ENCODE measurements at regions of chr20 and their contacts with region 1.

Region 1: DNA sequence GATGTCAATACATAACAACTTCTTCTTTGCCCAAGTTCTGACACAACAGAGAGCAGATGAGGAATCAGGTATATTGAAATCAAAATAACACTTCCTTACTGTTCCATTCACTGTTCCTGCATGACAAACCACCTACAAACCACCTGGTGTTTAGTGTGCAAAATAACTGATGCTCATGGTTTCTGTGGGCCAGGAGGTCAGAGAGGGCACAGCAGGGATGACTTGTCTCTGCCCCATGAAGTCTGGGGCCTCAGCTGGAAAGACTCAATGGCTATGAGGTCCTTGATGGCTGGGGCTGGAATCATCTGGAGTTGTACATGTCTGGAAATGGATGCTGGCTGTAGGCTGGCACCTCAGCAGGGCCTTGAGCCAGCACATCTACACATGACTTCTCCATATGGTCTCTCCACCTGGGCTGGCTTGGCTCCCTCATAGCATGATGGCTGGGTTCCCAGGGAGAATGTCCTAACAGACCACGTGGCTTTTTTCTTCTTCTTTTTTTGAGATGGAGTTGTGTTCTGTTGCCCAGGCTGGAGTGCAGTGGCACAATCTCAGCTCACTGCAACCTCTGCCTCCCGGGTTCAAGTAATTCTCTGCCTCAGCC is 7.4 kb upstream of the COX4I2 start:
- DNase-seq: peak; percentile 30
- ATAC-seq: peak; percentile 42
- H3K4me3 Mint-ChIP-seq: no peak overlapping the region
- H3K27ac Mint-ChIP-seq: no peak overlapping the region
- H3K4me1 Mint-ChIP-seq: peaks cover 5% of the 10 kb centered on the region
- H3K27me3 Mint-ChIP-seq: no peaks in the 10 kb centered on the region
- CTCF ChIP-seq: no peak

Region 2: GRCh38 chr20:31595654-31596411 is 34.5 kb before region 1 on chr20:
- CTCF ChIA-PET with region 1: no interaction called
- POLR2A ChIA-PET with region 1: no interaction called
- intact Hi-C with region 1: no loop called
- DNase-seq: no peak
- ATAC-seq: no peak
- H3K4me3 Mint-ChIP-seq: no peak overlapping the region
- H3K27ac Mint-ChIP-seq: no peak overlapping the region
- H3K4me1 Mint-ChIP-seq: peaks cover 6% of the 10 kb centered on the region
- H3K27me3 Mint-ChIP-seq: peaks cover 7% of the 10 kb centered on the region
- CTCF ChIP-seq: no peak

Region 3: DNA sequence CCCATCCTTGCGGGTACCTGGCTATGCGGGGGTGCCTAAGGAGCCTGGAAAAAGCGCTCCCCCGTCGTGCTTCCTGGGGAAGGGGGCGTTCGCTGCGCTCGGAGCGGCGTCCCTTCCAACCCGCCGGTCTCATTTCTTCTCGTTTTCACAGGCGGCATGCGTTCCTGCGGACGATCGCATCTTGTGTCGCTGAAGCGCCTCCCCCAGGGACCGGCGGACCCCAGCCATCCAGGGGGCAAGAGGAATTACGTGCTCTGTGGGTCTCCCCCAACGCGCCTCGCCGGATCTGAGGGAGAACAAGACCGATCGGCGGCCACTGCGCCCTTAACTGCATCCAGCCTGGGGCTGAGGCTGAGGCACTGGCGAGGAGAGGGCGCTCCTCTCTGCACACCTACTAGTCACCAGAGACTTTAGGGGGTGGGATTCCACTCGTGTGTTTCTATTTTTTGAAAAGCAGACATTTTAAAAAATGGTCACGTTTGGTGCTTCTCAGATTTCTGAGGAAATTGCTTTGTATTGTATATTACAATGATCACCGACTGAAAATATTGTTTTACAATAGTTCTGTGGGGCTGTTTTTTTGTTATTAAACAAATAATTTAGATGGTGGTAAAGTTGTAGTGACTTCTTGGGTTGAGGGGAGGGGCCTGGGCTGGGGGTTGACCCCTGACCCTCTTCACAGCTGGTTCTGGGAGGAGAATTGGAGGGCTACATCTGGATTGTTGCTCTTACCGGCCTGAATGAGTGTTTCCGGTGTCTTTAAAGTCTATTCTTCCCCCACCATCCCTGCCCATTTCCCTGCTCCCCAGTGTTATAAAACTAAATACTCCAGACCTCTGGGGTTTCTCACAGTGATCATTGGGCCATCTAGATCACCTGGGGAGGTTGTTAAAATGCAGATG is 24.1 kb before region 1 on chr20:
- CTCF ChIA-PET with region 1: no interaction called
- POLR2A ChIA-PET with region 1: no interaction called
- intact Hi-C with region 1: no loop called
- DNase-seq: no peak
- ATAC-seq: no peak
- H3K4me3 Mint-ChIP-seq: peak overlapping the region; percentile 78
- H3K27ac Mint-ChIP-seq: no peak overlapping the region
- H3K4me1 Mint-ChIP-seq: peaks cover 22% of the 10 kb centered on the region
- H3K27me3 Mint-ChIP-seq: peaks cover 49% of the 10 kb centered on the region
- CTCF ChIP-seq: no peak

Region 4: GRCh38 chr20:31644701-31645100 is 14.4 kb after region 1 on chr20:
- CTCF ChIA-PET with region 1: interaction called, 17 read pairs
- POLR2A ChIA-PET with region 1: interaction called, 3 read pairs
- intact Hi-C with region 1: no loop called
- DNase-seq: no peak
- ATAC-seq: no peak
- H3K4me3 Mint-ChIP-seq: no peak overlapping the region
- H3K27ac Mint-ChIP-seq: no peak overlapping the region
- H3K4me1 Mint-ChIP-seq: peaks cover 17% of the 10 kb centered on the region
- H3K27me3 Mint-ChIP-seq: peaks cover 6% of the 10 kb centered on the region
- CTCF ChIP-seq: no peak

Region 5: DNA sequence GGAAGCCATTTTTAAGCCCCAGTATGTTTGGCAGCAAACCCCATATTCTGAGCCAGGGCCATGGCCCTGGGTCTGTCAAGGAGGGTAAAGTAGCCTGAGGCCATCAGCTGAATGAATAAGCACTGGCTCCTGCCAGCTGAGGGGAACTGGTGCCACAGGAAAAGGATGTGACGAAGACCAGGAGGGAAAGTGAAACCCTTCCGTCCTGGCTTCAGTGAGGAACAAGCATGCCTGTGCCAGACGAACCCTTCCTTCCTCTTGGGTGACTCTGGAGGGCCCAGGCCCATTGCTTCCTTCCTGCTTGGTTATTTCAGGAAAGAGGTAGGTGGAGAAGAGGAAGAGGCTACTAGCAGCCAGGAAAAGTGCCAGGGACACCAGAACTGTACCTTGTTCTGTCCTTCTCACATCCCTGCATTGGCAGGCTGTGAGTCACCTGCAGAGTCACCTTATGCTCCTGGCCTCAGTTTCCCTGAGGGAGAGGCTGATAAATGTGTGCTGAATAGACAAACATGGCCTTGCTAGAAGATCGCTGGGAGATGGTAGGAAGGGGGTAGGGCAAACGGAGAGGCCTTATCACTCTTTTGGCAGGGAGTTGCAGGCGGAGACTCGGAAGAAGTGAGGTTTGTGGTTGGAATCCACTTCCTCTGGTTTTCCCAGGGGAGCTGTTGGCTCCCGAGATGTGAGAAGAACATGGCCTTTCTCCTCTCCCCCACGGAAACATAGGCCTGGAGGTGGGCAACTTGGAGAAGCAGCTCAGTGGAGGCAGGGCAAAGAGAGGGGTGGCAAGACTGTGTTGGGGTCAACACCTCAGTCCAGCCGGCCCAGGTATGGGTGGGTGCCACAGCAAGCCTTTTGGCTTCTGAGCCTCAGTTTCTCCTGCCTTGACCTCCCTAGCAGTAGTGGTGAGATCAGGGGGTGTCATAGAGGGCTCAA is 44.9 kb after region 1 on chr20:
- CTCF ChIA-PET with region 1: interaction called, 14 read pairs
- POLR2A ChIA-PET with region 1: interaction called, 3 read pairs
- intact Hi-C with region 1: no loop called
- DNase-seq: peak; percentile 76
- ATAC-seq: peak; percentile 63
- H3K4me3 Mint-ChIP-seq: peak overlapping the region; percentile 77
- H3K27ac Mint-ChIP-seq: peak overlapping the region; percentile 97
- H3K4me1 Mint-ChIP-seq: peaks cover 80% of the 10 kb centered on the region
- H3K27me3 Mint-ChIP-seq: no peaks in the 10 kb centered on the region
- CTCF ChIP-seq: no peak

Region 6: GRCh38 chr20:31685853-31686641 is 55.8 kb after region 1 on chr20:
- CTCF ChIA-PET with region 1: no interaction called
- POLR2A ChIA-PET with region 1: no interaction called
- intact Hi-C with region 1: no loop called
- DNase-seq: no peak
- ATAC-seq: no peak
- H3K4me3 Mint-ChIP-seq: no peak overlapping the region
- H3K27ac Mint-ChIP-seq: peak overlapping the region; percentile 58
- H3K4me1 Mint-ChIP-seq: peaks cover 70% of the 10 kb centered on the region
- H3K27me3 Mint-ChIP-seq: no peaks in the 10 kb centered on the region
- CTCF ChIP-seq: no peak

Region 7: DNA sequence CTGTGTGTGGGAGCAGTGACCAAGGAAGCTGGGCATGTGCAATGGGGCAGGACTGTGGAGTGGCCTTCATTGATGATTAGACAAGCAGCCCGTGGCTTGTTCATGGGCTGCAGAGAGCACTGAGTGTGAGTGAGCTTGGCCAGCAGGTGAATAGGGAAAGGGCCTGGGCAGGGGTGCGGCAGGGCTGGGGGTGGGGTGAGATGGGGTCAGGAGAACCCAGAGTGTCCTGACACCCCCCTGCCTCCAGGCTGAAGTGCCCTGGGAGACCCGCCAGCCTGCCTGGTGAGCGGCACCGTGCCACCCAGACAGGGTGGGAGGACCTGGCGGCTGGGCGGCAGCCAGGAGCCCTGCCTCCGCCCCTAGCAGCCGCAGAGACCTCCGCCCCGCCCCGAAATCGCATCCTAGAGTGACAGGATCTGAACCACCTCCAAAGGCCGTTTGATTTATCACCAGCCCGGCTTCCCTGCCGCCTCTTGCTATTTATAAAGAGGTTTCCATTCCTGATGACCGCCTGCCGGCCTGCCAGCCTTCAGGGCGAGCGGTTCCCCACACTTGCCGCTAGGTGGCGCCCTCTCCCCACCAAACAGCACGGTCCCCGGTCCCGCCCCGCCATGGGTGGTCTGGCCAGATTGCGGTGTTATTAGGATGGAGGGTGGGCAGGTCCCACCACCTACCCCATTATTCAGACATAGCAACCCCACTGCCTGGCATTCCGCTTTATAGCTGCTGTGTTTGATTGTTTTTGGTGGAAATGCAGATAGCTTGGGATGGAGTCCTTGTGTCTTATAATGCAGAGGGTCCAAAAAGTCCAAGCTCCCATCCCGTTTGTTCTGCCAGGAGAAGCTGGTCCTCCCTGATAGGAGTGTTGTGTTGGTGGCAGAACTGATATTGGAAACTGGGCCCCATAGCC is 192.4 kb after region 1 on chr20:
- CTCF ChIA-PET with region 1: no interaction called
- POLR2A ChIA-PET with region 1: no interaction called
- intact Hi-C with region 1: no loop called
- DNase-seq: peak; percentile 78
- ATAC-seq: peak; percentile 92
- H3K4me3 Mint-ChIP-seq: no peak overlapping the region
- H3K27ac Mint-ChIP-seq: no peak overlapping the region
- H3K4me1 Mint-ChIP-seq: peaks cover 2% of the 10 kb centered on the region
- H3K27me3 Mint-ChIP-seq: peaks cover 2% of the 10 kb centered on the region
- CTCF ChIP-seq: peak; percentile 99

Measured in activated CD8-positive, alpha-beta T cell treated with anti-CD3 and anti-CD28 coated beads for 36 hours (primary cell).